Natural killer cell (primary cell): ENCODE measurements at regions of chr3 and their contacts with region 1.

Region 1: DNA sequence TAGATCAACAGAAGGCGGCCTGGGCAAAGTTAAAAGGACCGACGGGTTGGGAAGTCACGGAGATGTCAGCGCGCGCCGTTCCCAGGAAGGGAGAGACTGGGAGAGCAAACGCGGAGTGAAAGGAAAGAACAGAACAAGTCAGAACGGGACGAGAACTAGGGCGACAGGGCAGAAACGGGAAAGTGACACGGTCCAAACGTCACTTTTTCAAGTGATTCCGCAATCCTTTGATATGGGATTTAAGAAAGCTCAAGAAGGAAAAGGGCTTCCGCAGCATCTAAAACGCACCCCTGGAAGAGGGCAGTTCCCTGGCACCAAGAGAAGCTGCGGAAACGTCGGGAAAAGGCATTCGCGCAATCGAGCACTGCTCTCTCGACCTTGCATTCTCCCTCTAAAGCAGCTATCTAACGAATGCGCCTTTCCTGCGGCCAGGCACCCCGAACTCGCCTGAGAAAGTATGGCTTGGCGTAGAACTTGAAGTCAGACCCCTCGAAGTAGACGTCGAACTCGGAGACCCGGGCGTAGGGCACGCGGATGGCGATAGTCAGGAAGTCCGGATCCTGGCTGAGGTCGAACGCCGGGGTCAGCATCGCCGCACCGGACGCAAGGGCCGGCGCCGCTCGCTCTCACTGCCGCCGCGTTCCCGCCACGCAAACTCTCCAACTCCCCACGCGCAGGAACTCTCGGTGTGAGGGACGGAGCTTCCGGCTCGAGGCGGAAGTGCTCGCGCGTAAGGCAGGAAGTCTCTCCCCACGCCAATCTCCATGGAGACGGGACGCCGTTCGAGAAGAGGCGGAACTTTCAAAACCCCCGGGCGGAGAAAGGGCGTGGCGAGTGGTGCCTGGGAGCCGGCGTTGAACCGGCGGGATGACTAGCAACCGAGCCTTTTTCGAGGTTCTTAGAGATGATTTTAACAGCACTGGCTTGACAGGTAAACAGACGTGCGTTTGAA is at the start of gene SHQ1:
- DNase-seq: peak; percentile 85 to 98
- ATAC-seq: peak; percentile 95 to 97 (median 95)
- H3K4me3 ChIP-seq: peak within 1 kb of the TSS; percentile 81
- H3K4me3 Mint-ChIP-seq: peak within 1 kb of the TSS; percentile 93
- H3K27ac ChIP-seq: peak within 1 kb of the TSS; percentile 32
- H3K27ac Mint-ChIP-seq: peak within 1 kb of the TSS; percentile 74 to 83
- H3K4me1 ChIP-seq: peaks cover 10% of the 10 kb centered on the region
- H3K4me1 Mint-ChIP-seq: peaks cover 39 to 45% of the 10 kb centered on the region in 2 donors
- H3K27me3 ChIP-seq: no peaks in the 10 kb centered on the region
- H3K27me3 Mint-ChIP-seq: no peaks in the 10 kb centered on the region
- CTCF ChIP-seq: no peak
- total RNA-seq, gene SHQ1: 16.3 to 36.7 (median 35.9) TPM

Region 2: DNA sequence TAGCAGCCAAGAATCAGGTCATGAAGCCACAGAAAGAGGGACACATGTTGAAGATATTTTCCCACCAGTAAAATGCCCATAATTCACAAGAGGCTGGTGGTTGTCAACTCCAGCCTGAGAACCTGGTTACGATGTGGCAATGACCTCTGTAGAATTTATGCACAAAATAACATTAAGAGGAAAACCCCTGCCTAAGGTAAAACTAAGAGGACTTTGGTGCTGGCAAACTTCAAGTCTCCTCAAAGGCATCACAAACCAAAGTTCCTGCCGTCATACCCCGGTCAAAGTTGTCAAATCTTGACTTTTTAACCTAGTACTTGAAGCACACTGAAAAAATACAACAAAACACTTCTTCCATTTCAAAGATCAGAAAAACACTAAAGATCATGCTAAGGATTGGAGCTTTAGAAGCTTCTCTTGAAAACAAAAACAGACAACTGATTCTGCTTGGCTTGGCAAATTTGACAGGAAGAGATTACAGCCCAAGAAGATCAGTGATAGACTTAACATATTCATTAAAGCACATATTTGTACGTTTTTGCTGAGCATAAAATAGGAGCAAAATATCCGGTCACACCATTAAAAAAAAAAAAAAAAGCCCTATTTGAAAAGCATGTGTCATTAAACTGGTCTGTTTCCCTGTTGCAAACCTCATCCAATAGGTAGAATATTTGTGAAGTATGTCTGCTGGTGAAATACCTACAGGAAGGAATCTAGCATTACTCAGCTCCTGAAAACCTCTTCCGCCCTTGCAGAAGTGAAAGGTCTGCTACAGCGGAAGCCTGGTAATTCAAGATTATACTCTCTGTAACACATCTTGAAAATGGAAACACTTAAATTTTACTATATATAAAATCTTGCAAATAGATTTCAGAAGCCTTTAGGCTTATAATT is 1145.6 kb before region 1 on chr3:
- intact Hi-C with region 1: loop called (anchors 10 kb)
- DNase-seq: peak in 1 of 2 donors; percentile 69
- ATAC-seq: peak; percentile 83 to 88 (median 85)
- H3K4me3 ChIP-seq: no peak overlapping the region
- H3K4me3 Mint-ChIP-seq: peak overlapping the region; percentile 84
- H3K27ac ChIP-seq: peak overlapping the region; percentile 59
- H3K27ac Mint-ChIP-seq: peak overlapping the region; percentile 93 to 95
- H3K4me1 ChIP-seq: peaks cover 20% of the 10 kb centered on the region
- H3K4me1 Mint-ChIP-seq: peaks cover 58 to 67% of the 10 kb centered on the region in 2 donors
- H3K27me3 ChIP-seq: no peaks in the 10 kb centered on the region
- H3K27me3 Mint-ChIP-seq: no peaks in the 10 kb centered on the region
- CTCF ChIP-seq: no peak

Region 3: GRCh38 chr3:72872183-72872582 is 24.2 kb after region 1 on chr3:
- intact Hi-C with region 1: no loop called
- DNase-seq: no peak
- ATAC-seq: no peak
- H3K4me3 ChIP-seq: no peak overlapping the region
- H3K4me3 Mint-ChIP-seq: no peak overlapping the region
- H3K27ac ChIP-seq: no peak overlapping the region
- H3K27ac Mint-ChIP-seq: no peak overlapping the region
- H3K4me1 ChIP-seq: no peaks in the 10 kb centered on the region
- H3K4me1 Mint-ChIP-seq: no peaks in the 10 kb centered on the region
- H3K27me3 ChIP-seq: peaks cover 2% of the 10 kb centered on the region
- H3K27me3 Mint-ChIP-seq: peaks cover 6 to 7% of the 10 kb centered on the region in 2 donors
- CTCF ChIP-seq: no peak

Region 4: GRCh38 chr3:73885862-73886261 is 1037.8 kb after region 1 on chr3:
- intact Hi-C with region 1: no loop called
- DNase-seq: no peak
- ATAC-seq: no peak
- H3K4me3 ChIP-seq: no peak overlapping the region
- H3K4me3 Mint-ChIP-seq: no peak overlapping the region
- H3K27ac ChIP-seq: no peak overlapping the region
- H3K27ac Mint-ChIP-seq: no peak overlapping the region
- H3K4me1 ChIP-seq: no peaks in the 10 kb centered on the region
- H3K4me1 Mint-ChIP-seq: no peaks in the 10 kb centered on the region
- H3K27me3 ChIP-seq: no peaks in the 10 kb centered on the region
- H3K27me3 Mint-ChIP-seq: no peaks in the 10 kb centered on the region
- CTCF ChIP-seq: no peak